GM12878 (cell line): ENCODE measurements at regions of chr2 and their contacts with region 1.

Region 1: GRCh38 chr2:56749152-56749752 is 565.5 kb downstream of the CCDC85A start:
- DNase-seq: no peak
- ATAC-seq: peak; percentile 56; the same call in 2 of the 3 replicates
- H3K4me3 ChIP-seq: no peak overlapping the region
- H3K27ac ChIP-seq: no peak overlapping the region
- H3K4me1 ChIP-seq: no peaks in the 10 kb centered on the region
- H3K27me3 ChIP-seq: no peaks in the 10 kb centered on the region
- CTCF ChIP-seq: peak; percentile 30 to 62 (median 33); a peak in 4 of 6 replicates
- EP300 ChIP-seq: no peak
- POLR2A ChIP-seq: no peak
- RAD21 ChIP-seq: peak; percentile 66

Region 2: DNA sequence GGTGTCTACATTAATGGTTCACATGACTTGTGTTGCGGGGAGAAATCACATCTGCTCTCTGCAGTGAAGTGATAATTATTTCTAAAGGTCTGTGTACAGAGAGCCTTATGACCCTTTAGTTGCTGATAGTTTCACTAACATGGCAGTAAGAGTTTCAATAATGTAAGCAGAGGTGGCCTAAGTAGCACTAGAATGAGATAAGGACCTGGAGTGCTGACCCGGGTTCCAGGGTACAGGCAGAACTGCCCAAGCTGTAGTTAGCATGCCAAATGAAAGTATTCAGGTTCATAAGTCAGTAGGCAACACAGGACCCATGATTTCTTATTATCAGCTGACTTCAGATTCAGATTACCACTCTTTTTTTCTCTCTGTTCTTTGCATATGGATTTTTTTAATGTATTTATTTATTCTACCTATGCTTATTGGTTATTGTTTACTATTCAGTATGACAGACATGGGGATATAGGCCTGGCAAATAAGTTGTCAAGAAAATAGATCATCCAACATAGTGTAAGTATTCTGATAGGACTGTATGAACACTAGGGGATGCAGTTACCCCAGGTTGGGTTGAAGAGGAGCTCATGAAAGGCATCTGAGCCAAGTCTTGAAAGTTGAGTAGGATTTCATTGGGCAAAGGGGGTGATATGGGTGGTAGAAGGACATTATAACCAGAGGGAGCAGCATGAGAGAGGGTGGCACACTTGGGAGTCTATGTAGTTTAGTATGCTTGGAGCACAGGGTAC is 460.2 kb before region 1 on chr2:
- CTCF ChIA-PET with region 1: interaction called, 7 read pairs
- POLR2A ChIA-PET with region 1: no interaction called
- RAD21 ChIA-PET with region 1: interaction called, 3 read pairs
- SMC1A ChIA-PET with region 1: no interaction called
- in situ Hi-C with region 1: no loop called
- intact Hi-C with region 1: loop called (anchors 2 kb)
- DNase-seq: no peak
- ATAC-seq: peak; percentile 47; the same call in 2 of the 3 replicates
- H3K4me3 ChIP-seq: no peak overlapping the region
- H3K27ac ChIP-seq: no peak overlapping the region
- H3K4me1 ChIP-seq: no peaks in the 10 kb centered on the region
- H3K27me3 ChIP-seq: no peaks in the 10 kb centered on the region
- CTCF ChIP-seq: peak; percentile 10 to 32 (median 27); a peak in 3 of 6 replicates
- EP300 ChIP-seq: no peak
- POLR2A ChIP-seq: no peak
- RAD21 ChIP-seq: peak; percentile 30; the same call in 1 of the 2 replicates

Region 3: GRCh38 chr2:56613920-56614319 is 135.3 kb before region 1 on chr2:
- CTCF ChIA-PET with region 1: no interaction called
- POLR2A ChIA-PET with region 1: no interaction called
- RAD21 ChIA-PET with region 1: no interaction called
- SMC1A ChIA-PET with region 1: no interaction called
- in situ Hi-C with region 1: no loop called
- intact Hi-C with region 1: no loop called
- DNase-seq: no peak
- ATAC-seq: no peak
- H3K4me3 ChIP-seq: no peak overlapping the region
- H3K27ac ChIP-seq: no peak overlapping the region
- H3K4me1 ChIP-seq: no peaks in the 10 kb centered on the region
- H3K27me3 ChIP-seq: no peaks in the 10 kb centered on the region
- CTCF ChIP-seq: no peak
- EP300 ChIP-seq: no peak
- POLR2A ChIP-seq: no peak
- RAD21 ChIP-seq: no peak

Region 4: GRCh38 chr2:56729212-56729611 is 20.0 kb before region 1 on chr2:
- CTCF ChIA-PET with region 1: no interaction called
- POLR2A ChIA-PET with region 1: no interaction called
- RAD21 ChIA-PET with region 1: no interaction called
- SMC1A ChIA-PET with region 1: no interaction called
- in situ Hi-C with region 1: no loop called
- intact Hi-C with region 1: no loop called
- DNase-seq: no peak
- ATAC-seq: no peak
- H3K4me3 ChIP-seq: no peak overlapping the region
- H3K27ac ChIP-seq: no peak overlapping the region
- H3K4me1 ChIP-seq: no peaks in the 10 kb centered on the region
- H3K27me3 ChIP-seq: no peaks in the 10 kb centered on the region
- CTCF ChIP-seq: no peak
- EP300 ChIP-seq: no peak
- POLR2A ChIP-seq: no peak
- RAD21 ChIP-seq: no peak